Spleen (tissue), 13 donors: ENCODE measurements at regions of chr11 and their contacts with region 1.

Region 1: DNA sequence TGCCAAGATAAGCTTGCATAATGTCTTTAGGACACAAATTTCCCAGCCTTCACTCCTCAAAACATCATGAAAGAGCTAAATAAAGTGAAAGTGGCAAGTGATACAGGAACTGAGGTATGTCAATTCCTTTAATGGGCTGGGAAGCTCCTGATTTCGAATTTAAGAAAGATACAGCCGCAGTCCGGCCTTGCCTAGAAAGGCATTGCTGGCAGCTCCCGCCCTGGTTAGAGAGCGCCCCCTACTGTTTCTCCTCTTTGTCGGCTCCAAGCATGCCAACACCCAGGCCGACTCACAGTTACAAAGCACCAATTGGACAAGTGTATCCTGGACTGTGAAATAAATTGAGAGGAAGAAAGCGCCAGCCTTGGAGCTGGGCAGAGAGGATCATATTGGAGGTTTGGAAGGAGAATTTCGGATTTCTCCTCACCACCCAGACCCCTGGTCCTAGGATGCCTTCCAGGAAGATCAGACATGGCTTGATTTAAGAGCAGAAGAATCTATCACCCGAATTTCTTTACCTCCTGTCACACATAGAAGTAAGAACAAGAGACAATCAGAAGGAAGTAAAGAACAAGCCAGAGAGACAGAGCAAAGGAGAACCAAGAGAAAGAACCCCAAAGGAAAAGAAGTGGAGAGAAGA is 84.0 kb downstream of the FAM76B start:
- DNase-seq: peak; percentile 94
- H3K4me3 ChIP-seq: no peak overlapping the region
- H3K27ac ChIP-seq: peak overlapping the region; percentile 17 to 79 (median 60)
- H3K4me1 ChIP-seq: peaks cover 32 to 56% (median 50%) of the 10 kb centered on the region in 6 donors
- H3K27me3 ChIP-seq: no peaks in the 10 kb centered on the region
- CTCF ChIP-seq: peak; percentile 79 to 96 (median 91)
- POLR2A ChIP-seq: no peak

Region 2: GRCh38 chr11:95089620-95090542 is 615.7 kb before region 1 on chr11 and contains the start of gene ENDOD1:
- intact Hi-C with region 1: loop called (anchors 10 kb)
- DNase-seq: peak; percentile 98
- H3K4me3 ChIP-seq: peak within 1 kb of the TSS; percentile 69 to 92 (median 83)
- H3K27ac ChIP-seq: peak within 1 kb of the TSS; percentile 91 to 97 (median 94)
- H3K4me1 ChIP-seq: peaks cover 17 to 60% (median 55%) of the 10 kb centered on the region in 6 donors
- H3K27me3 ChIP-seq: no peaks in the 10 kb centered on the region
- CTCF ChIP-seq: peak in 2 of 11 experiments; percentile 4 to 17
- POLR2A ChIP-seq: peak in 2 of 3 donors; percentile 86 to 90
- total RNA-seq, gene ENDOD1: 34.3 to 80.5 (median 70.5) TPM

Region 3: GRCh38 chr11:95150946-95151684 is 554.5 kb before region 1 on chr11:
- intact Hi-C with region 1: loop called (anchors 5 kb)
- DNase-seq: peak; percentile 97
- H3K4me3 ChIP-seq: peak overlapping the region; percentile 58 to 83 (median 63)
- H3K27ac ChIP-seq: peak overlapping the region; percentile 89 to 96 (median 92)
- H3K4me1 ChIP-seq: peaks cover 27 to 79% (median 54%) of the 10 kb centered on the region in 6 donors
- H3K27me3 ChIP-seq: no peaks in the 10 kb centered on the region
- CTCF ChIP-seq: peak; percentile 84 to 99 (median 94)
- POLR2A ChIP-seq: peak in 2 of 3 donors; percentile 50 to 62

Region 4: GRCh38 chr11:95231127-95231880 is 474.3 kb before region 1 on chr11 and contains the start of gene SESN3:
- intact Hi-C with region 1: loop called (anchors 10 kb)
- DNase-seq: peak; percentile 100
- H3K4me3 ChIP-seq: peak within 1 kb of the TSS; percentile 67 to 91 (median 84)
- H3K27ac ChIP-seq: peak within 1 kb of the TSS; percentile 86 to 96 (median 93)
- H3K4me1 ChIP-seq: peaks cover 8 to 66% (median 42%) of the 10 kb centered on the region in 6 donors
- H3K27me3 ChIP-seq: no peaks in the 10 kb centered on the region
- CTCF ChIP-seq: peak in 2 of 11 experiments; percentile 29 to 49
- POLR2A ChIP-seq: peak; percentile 32 to 94 (median 65)
- total RNA-seq, gene SESN3: 51.0 to 79.9 (median 67.2) TPM

Region 5: GRCh38 chr11:95764267-95764898 is 58.8 kb after region 1 on chr11:
- intact Hi-C with region 1: loop called (anchors 5 kb)
- DNase-seq: no peak
- H3K4me3 ChIP-seq: no peak overlapping the region
- H3K27ac ChIP-seq: no peak overlapping the region
- H3K4me1 ChIP-seq: peaks cover 0 to 25% (median 6%) of the 10 kb centered on the region in 6 donors
- H3K27me3 ChIP-seq: no peaks in the 10 kb centered on the region
- CTCF ChIP-seq: peak; percentile 56 to 80 (median 76)
- POLR2A ChIP-seq: no peak